T-cell (primary cell): ENCODE measurements at regions of chr6 and their contacts with region 1.

Region 1: DNA sequence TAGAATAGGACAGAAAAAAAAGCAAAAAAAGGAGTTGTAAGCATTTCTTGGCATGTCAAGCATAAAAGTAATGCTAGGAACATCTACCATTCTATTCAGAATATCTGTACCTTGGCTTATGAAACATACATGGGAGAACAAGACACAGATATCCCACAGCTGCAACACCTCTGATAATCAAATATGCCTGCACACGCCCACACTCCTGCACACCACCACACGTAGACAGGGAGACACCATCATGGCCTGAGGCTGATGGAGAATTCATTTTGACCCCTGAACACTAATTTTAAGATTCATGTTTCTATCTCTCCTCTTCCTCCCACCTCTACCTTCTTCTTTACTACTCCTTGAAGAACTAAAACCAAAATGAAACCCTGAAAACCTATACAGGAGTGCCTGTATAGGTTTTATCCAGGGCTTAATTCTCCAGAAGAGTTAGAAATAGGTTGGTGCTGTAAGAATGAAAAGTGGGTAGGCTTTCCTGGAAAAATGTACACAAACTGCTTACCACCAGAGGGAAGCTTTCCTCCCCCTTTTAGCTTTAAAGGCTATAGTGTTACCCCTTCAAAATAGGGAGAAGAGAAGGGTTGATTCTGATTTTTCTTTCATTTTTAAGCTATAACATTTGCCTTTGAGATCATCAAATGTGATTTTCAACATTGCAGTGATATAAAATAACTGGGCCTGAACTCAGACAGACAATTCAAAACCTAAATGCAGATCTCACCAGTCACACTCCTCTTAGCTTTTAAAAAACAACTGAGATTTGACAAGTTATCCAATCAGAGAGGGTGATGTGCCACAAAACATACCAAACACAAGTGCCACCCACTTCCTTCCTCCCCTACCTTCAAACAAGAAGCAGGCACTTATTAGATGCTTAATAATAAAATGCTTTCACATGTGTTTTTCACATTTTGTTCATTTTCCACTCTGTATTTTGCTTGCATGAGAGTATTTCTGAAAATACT is 57.9 kb downstream of the ELOVL5 start:
- DNase-seq: peak in 24 of 35 experiments; percentile 11 to 71 (median 26)
- ATAC-seq: peak; percentile 86 to 95 (median 91)
- H3K4me3 ChIP-seq: no peak overlapping the region
- H3K4me3 Mint-ChIP-seq: peak overlapping the region; percentile 14 to 53 (median 15)
- H3K27ac ChIP-seq: peak overlapping the region; percentile 72
- H3K27ac Mint-ChIP-seq: peak overlapping the region; percentile 90 to 92
- H3K4me1 ChIP-seq: peaks cover 44 to 54% of the 10 kb centered on the region in 2 experiments
- H3K4me1 Mint-ChIP-seq: peaks cover 77 to 90% (median 79%) of the 10 kb centered on the region in 3 donors
- H3K27me3 ChIP-seq: no peaks in the 10 kb centered on the region
- H3K27me3 Mint-ChIP-seq: no peaks in the 10 kb centered on the region

Region 2: DNA sequence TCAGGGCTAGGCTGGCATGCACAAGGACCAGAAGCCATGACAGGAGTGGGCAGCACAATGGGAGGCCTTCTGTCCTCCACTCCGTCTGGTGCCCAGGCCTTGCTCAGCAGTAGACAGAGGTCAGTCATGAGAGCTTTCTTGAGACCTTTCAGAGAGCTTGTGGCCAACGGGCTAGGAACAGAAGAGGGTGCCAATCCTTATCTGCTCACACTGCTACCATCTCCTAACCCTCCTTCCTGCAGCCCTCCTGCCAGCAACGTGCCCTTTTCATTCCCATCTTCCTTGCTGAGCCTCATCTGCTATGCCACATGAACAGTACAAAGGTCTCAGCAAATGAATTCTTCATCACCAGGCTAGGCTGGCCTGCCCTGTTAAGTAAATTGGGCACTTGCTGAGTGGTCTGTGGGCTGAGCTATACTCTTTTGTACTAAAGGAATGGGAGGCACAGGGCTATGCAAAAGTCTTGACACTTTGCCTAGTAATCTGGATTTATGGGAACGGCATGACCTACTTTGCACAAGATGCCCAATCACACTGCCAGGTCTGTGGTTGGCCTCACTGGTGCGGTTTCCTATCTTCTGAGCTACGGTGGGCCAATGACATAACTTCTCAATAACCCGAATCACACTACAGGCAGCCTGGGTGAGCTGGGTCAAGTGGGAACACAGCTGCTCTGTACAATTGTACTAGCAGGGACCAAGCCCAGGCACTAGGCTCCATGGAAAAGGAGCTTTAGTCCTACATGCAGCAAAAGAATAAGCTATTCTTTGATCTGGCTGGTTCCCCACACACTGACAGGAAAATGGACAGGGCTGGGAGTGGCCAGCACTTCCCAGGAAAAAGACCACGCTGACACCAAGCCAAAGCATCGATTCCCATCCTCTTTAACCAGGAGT is 10.1 kb after region 1 on chr6:
- CTCF ChIA-PET with region 1: interaction called in 1 of 2 experiments, 22 read pairs
- POLR2A ChIA-PET with region 1: interaction called, 8 to 14 read pairs
- DNase-seq: peak in 30 of 35 experiments; percentile 5 to 60 (median 25)
- ATAC-seq: peak in 1 of 4 experiments; percentile 57
- H3K4me3 ChIP-seq: no peak overlapping the region
- H3K4me3 Mint-ChIP-seq: peak overlapping the region; percentile 21 to 75 (median 25)
- H3K27ac ChIP-seq: peak overlapping the region; percentile 35
- H3K27ac Mint-ChIP-seq: peak overlapping the region; percentile 79 to 83
- H3K4me1 ChIP-seq: peaks cover 37 to 40% of the 10 kb centered on the region in 2 experiments
- H3K4me1 Mint-ChIP-seq: peaks cover 80 to 85% (median 81%) of the 10 kb centered on the region in 3 donors
- H3K27me3 ChIP-seq: no peaks in the 10 kb centered on the region
- H3K27me3 Mint-ChIP-seq: no peaks in the 10 kb centered on the region